HCT116 (cell line): ENCODE measurements at regions of chr3 and their contacts with region 1.

Region 1: DNA sequence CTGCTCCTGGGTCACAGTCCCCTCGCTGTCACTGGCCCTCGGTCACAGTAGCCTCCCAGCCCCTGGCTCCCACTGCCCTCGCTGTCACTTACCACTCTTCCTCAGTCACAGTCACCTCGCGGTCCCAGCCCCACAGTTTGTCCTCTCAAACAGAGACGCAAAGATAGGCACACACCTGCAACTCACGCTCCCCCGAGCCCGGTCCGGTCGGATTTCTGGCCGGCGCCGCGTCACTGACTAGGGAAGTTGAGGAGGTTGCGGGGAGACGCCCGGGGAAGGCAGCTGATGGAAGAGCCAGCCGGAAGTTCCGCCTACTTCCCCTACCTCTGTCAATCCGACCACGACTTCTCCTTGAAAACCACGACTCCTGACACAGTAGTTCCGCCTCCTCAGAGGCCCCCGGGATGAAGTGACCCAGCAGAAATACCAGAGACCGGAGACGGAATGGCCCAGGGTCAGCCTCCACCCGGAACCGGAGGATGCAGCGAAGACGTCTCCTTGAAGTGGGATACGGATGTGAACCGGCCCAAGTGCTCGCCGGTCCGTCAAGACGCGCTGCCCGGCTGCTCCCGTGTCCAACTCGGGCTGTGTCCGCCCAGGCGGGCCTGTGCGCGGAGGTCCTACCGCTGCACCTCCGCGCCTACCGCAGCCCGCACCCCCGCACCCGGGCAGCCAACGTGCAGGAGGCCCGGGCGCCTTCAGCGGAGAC is at the start of gene PCYT1A:
- DNase-seq: peak; percentile 92
- ATAC-seq: peak; percentile 90
- H3K4me3 ChIP-seq: peak within 1 kb of the TSS; percentile 70 to 99
- H3K27ac ChIP-seq: peak within 1 kb of the TSS; percentile 97
- H3K4me1 ChIP-seq: peaks cover 8 to 14% of the 10 kb centered on the region in 2 experiments
- H3K27me3 ChIP-seq: no peaks in the 10 kb centered on the region
- CTCF ChIP-seq: no peak
- POLR2A ChIP-seq: peak; percentile 24
- RAD21 ChIP-seq: peak; percentile 23
- total RNA-seq, gene PCYT1A: 32.1 TPM

Region 2: DNA sequence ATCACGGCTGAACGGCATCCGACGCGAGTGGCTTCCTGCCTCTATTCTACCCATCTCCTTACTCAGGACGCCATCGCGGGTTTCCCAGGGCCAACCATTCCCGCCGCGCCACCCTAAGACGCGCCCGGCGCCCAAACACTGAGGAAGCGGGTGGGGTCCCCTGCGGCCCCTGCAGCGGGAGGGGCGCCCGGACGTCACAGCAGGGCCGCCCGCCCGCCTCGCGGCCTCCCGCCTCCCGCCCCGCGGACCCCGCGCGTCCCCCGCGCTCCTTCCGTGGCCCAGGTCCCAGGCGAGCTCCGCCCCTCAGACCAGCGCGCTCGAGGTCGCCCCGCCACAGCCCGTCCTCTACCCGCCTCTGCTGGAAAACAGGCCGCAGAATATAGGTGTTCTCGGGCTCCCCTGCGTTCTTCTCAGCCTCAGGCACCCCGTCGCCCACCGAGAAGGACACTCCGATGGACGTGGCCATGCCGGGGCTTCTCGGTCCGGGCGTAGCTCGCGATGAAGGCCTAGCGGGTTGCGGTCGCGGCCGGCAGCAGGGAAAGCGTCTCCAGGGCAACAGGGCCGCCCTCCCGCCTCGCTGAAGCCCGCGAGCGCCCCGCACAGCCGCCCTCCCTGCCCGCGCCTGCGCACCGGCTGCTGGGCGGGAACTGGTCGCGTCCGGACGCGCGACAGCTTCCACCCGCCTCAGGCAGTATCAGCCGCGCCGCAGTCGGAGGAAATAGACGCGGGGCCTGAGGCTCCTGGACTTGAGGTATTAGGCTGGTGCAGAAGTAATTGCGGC is 30.3 kb after region 1 on chr3 and contains the start of gene DYNLT2B:
- CTCF ChIA-PET with region 1: no interaction called
- POLR2A ChIA-PET with region 1: no interaction called
- RAD21 ChIA-PET with region 1: no interaction called
- intact Hi-C with region 1: loop called (anchors 1 kb)
- DNase-seq: peak; percentile 74
- ATAC-seq: peak; percentile 88
- H3K4me3 ChIP-seq: peak within 1 kb of the TSS; percentile 86 to 89
- H3K27ac ChIP-seq: peak within 1 kb of the TSS; percentile 75
- H3K4me1 ChIP-seq: peaks cover 5 to 40% of the 10 kb centered on the region in 2 experiments; a peak in 3 of 4 replicates
- H3K27me3 ChIP-seq: no peaks in the 10 kb centered on the region
- CTCF ChIP-seq: no peak
- POLR2A ChIP-seq: peak; percentile 67
- RAD21 ChIP-seq: 0 out of 2 replicates have a peak, but pooled peaks have one; percentile 17
- total RNA-seq, gene DYNLT2B: 9.7 TPM

Region 3: DNA sequence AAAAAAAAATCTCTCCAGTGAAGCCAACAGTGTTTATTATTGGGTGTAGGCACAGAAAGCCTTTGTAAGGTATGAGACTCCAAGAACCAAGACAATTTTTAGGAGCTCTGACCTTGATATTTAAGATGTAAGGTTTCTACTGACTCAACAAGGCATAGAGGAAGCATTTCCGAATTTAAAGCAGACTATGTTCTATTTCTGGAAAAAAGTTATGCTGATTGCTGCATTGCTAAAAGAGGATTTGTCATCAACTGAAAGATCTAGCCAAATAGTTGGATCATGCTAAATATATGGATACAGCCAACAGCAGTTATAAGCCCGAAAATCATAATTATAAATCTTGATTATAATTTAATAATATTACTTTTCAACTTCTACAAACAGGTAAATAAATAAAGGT is 795.3 kb after region 1 on chr3:
- CTCF ChIA-PET with region 1: no interaction called
- POLR2A ChIA-PET with region 1: no interaction called
- RAD21 ChIA-PET with region 1: no interaction called
- intact Hi-C with region 1: no loop called
- DNase-seq: no peak
- ATAC-seq: no peak
- H3K4me3 ChIP-seq: no peak overlapping the region
- H3K27ac ChIP-seq: no peak overlapping the region
- H3K4me1 ChIP-seq: peaks cover 0 to 9% of the 10 kb centered on the region in 2 experiments; a peak in 2 of 4 replicates
- H3K27me3 ChIP-seq: no peaks in the 10 kb centered on the region
- CTCF ChIP-seq: no peak
- POLR2A ChIP-seq: no peak
- RAD21 ChIP-seq: no peak